Natural killer cell (primary cell): ENCODE measurements at regions of chr3 and their contacts with region 1.

Region 1: GRCh38 chr3:28241221-28242160 is at the start of gene CMC1:
- DNase-seq: peak; percentile 77 to 93
- ATAC-seq: peak; percentile 80 to 91 (median 87)
- H3K4me3 ChIP-seq: peak within 1 kb of the TSS; percentile 90
- H3K4me3 Mint-ChIP-seq: peak within 1 kb of the TSS; percentile 96
- H3K27ac ChIP-seq: peak within 1 kb of the TSS; percentile 72
- H3K27ac Mint-ChIP-seq: peak within 1 kb of the TSS; percentile 7 to 88
- H3K4me1 ChIP-seq: peaks cover 28% of the 10 kb centered on the region
- H3K4me1 Mint-ChIP-seq: peaks cover 41 to 46% of the 10 kb centered on the region in 2 donors
- H3K27me3 ChIP-seq: no peaks in the 10 kb centered on the region
- H3K27me3 Mint-ChIP-seq: peaks cover 2 to 8% of the 10 kb centered on the region in 2 donors
- CTCF ChIP-seq: no peak
- total RNA-seq, gene CMC1: 122 to 157 (median 136) TPM

Region 2: GRCh38 chr3:27880969-27881892 is 360.3 kb before region 1 on chr3:
- intact Hi-C with region 1: no loop called
- DNase-seq: peak in 1 of 2 donors; percentile 79
- ATAC-seq: peak; percentile 89 to 94 (median 93)
- H3K4me3 ChIP-seq: peak overlapping the region; percentile 6
- H3K4me3 Mint-ChIP-seq: peak overlapping the region; percentile 85
- H3K27ac ChIP-seq: peak overlapping the region; percentile 65
- H3K27ac Mint-ChIP-seq: peak overlapping the region; percentile 59 to 74
- H3K4me1 ChIP-seq: peaks cover 26% of the 10 kb centered on the region
- H3K4me1 Mint-ChIP-seq: peaks cover 43 to 51% of the 10 kb centered on the region in 2 donors
- H3K27me3 ChIP-seq: no peaks in the 10 kb centered on the region
- H3K27me3 Mint-ChIP-seq: peaks cover 9 to 23% of the 10 kb centered on the region in 2 donors
- CTCF ChIP-seq: no peak

Region 3: GRCh38 chr3:28089527-28089897 is 152.0 kb before region 1 on chr3:
- intact Hi-C with region 1: loop called (anchors 5 kb)
- DNase-seq: peak in 1 of 2 donors; percentile 35
- ATAC-seq: peak; percentile 66 to 86 (median 71)
- H3K4me3 ChIP-seq: no peak overlapping the region
- H3K4me3 Mint-ChIP-seq: peak overlapping the region; percentile 59
- H3K27ac ChIP-seq: peak overlapping the region; percentile 58
- H3K27ac Mint-ChIP-seq: peak overlapping the region; percentile 80 to 84
- H3K4me1 ChIP-seq: peaks cover 13% of the 10 kb centered on the region
- H3K4me1 Mint-ChIP-seq: peaks cover 49 to 51% of the 10 kb centered on the region in 2 donors
- H3K27me3 ChIP-seq: no peaks in the 10 kb centered on the region
- H3K27me3 Mint-ChIP-seq: no peaks in the 10 kb centered on the region
- CTCF ChIP-seq: no peak